CD8-positive, alpha-beta T cell (primary cell): ENCODE measurements at regions of chr9 and their contacts with region 1.

Region 1: DNA sequence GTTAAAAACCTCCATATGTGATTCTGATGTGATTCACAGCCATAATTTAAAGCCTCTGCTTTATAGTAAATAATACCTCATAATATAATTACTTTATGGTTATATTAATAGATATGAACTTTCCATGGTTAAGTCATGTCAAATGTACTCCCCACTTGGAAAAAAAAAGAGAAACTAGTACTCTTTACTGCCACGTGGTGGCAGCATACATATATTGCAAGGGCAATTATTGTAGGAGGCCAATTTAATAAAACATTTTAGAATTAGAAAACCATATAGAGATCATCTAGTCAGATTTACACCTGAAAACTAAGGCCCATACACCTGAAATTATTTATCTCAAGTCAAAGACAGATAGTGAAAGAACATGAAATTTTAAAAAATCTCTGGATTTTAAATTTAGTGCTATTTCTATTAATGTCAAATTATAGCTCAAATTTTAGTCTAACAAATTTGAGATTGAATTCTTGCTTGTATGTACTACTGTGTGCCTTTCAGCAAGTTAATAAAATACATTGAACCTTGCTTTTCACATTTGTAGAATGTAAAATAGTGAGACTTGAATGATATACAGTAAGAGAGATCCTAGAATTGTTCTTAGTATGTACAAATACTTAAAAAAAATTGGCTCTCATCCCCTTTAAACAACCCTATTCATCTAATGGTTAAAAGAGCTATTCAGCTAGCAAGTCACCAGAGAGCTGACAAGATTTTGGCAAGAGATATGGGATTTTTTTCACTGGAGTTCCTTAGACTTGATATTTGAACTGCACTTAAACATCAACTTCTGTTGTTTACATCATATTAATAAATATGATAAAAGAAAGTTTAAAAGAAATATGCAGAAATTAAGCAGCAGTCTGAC is 603.8 kb downstream of the TLE4 start:
- DNase-seq: peak in 2 of 9 experiments; percentile 18 to 36
- ATAC-seq: no peak
- H3K4me3 ChIP-seq: no peak overlapping the region
- H3K4me3 Mint-ChIP-seq: no peak overlapping the region
- H3K27ac ChIP-seq: no peak overlapping the region
- H3K27ac Mint-ChIP-seq: no peak overlapping the region
- H3K4me1 ChIP-seq: no peaks in the 10 kb centered on the region
- H3K4me1 Mint-ChIP-seq: no peaks in the 10 kb centered on the region
- H3K27me3 ChIP-seq: peaks cover 0 to 4% of the 10 kb centered on the region in 2 experiments
- H3K27me3 Mint-ChIP-seq: peaks cover 5% of the 10 kb centered on the region
- CTCF ChIP-seq: peak; percentile 78

Region 2: GRCh38 chr9:78439190-78439865 is 1736.2 kb before region 1 on chr9:
- CTCF ChIA-PET with region 1: no interaction called
- POLR2A ChIA-PET with region 1: no interaction called
- intact Hi-C with region 1: loop called (anchors 5 to 10 kb)
- DNase-seq: peak; percentile 20 to 75 (median 62)
- ATAC-seq: peak; percentile 46
- H3K4me3 ChIP-seq: no peak overlapping the region
- H3K4me3 Mint-ChIP-seq: no peak overlapping the region
- H3K27ac ChIP-seq: no peak overlapping the region
- H3K27ac Mint-ChIP-seq: no peak overlapping the region
- H3K4me1 ChIP-seq: no peaks in the 10 kb centered on the region
- H3K4me1 Mint-ChIP-seq: peaks cover 5% of the 10 kb centered on the region
- H3K27me3 ChIP-seq: peaks cover 0 to 4% of the 10 kb centered on the region in 2 experiments
- H3K27me3 Mint-ChIP-seq: peaks cover 33% of the 10 kb centered on the region
- CTCF ChIP-seq: peak; percentile 96

Region 3: DNA sequence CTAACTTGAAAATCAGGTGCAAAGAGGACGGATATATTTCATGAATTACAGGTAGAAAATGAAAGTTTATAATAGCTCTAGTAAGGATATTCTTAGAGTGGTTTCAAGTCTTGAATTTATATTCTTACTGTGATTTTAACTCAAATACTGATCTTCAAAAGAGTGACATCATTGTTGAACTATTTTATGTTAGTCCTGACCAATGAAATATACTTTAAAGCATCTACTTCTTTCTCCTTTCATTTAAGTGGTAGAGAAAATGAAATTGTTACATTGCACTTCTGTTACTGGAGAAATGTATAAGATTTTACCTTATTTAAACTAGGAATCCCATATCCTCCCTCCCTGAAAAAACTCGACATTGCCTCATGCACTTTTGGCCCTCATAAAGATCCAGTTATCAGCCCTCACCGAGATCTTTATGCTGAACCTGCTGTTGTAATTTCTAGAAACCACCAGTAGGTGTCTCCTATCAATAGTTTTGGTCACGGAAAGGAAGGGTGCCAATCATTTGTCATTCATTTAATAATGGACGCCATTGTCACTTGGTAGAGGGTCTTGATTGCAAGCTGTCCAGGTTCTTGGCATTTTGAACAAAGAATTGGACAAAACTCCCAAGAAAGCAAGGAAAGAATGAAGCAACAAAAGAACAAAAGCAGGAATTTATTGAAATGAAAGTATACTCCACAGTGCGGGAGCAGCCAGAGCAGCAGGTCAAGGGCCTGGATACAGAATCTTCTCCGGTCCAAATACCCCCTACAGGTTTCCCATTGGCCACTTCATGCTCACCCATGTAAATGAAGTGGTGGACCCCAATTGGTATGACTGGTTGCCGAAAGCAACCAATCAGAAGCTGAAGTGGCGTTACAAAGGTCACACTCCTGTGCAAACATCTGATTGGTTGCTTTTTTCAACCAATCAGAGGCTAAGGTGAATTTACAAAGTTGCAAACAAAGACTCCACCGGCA is 1354.4 kb before region 1 on chr9:
- CTCF ChIA-PET with region 1: no interaction called
- POLR2A ChIA-PET with region 1: no interaction called
- intact Hi-C with region 1: loop called in 1 of 2 experiments (anchors 5 kb)
- DNase-seq: peak in 2 of 9 experiments; percentile 13 to 27
- ATAC-seq: no peak
- H3K4me3 ChIP-seq: no peak overlapping the region
- H3K4me3 Mint-ChIP-seq: peak overlapping the region; percentile 68
- H3K27ac ChIP-seq: no peak overlapping the region
- H3K27ac Mint-ChIP-seq: no peak overlapping the region
- H3K4me1 ChIP-seq: no peaks in the 10 kb centered on the region
- H3K4me1 Mint-ChIP-seq: peaks cover 4% of the 10 kb centered on the region
- H3K27me3 ChIP-seq: no peaks in the 10 kb centered on the region
- H3K27me3 Mint-ChIP-seq: no peaks in the 10 kb centered on the region
- CTCF ChIP-seq: peak; percentile 68

Region 4: DNA sequence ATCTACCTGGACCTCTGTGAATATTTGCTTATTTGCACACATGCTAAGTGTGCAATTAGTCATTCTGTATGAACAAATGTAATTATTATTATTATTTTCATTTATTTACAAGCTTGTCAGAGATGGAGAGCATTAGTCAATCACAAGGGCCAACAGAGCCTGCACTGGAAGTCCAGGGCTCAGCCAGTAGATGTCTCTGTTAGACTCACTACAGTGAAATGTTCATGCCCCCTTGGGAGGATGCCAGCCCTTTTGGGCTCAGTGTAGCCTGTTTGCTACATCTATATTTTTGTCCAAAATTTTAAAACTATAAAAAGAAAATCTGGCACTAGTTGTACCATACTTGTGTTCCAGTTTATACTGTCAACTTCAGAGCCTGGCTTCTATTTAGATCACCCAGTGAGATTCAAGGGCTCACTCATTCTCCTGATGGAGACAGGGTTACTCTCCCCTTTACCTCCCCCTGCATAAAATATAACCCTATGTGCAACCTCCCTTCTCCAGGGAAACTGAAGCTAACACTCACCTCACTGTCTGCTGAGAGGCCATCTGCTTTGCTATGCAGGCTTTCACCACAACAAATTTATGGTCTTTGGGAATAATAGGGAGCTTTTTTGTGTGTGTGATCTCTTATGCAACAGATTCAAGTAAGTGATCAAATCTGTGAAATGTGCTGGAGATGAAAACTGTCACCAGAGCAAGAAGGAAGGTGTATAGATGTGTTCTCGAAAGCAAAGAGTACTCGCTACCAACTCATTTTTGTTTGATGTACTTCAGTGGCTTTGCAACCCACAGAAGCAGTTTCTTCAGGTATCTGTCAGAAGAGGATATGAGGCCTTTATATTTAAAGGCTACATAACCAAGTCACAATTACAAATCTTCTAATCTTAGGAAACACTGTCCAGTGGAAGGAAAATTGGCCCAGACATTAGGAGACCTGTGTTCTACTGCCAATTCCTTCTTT is 703.7 kb before region 1 on chr9:
- CTCF ChIA-PET with region 1: no interaction called
- POLR2A ChIA-PET with region 1: no interaction called
- intact Hi-C with region 1: loop called (anchors 2 to 10 kb)
- DNase-seq: peak in 8 of 9 experiments; percentile 14 to 57 (median 41)
- ATAC-seq: peak; percentile 54
- H3K4me3 ChIP-seq: no peak overlapping the region
- H3K4me3 Mint-ChIP-seq: no peak overlapping the region
- H3K27ac ChIP-seq: no peak overlapping the region
- H3K27ac Mint-ChIP-seq: peak overlapping the region; percentile 30
- H3K4me1 ChIP-seq: peaks cover 17% of the 10 kb centered on the region
- H3K4me1 Mint-ChIP-seq: peaks cover 23% of the 10 kb centered on the region
- H3K27me3 ChIP-seq: no peaks in the 10 kb centered on the region
- H3K27me3 Mint-ChIP-seq: no peaks in the 10 kb centered on the region
- CTCF ChIP-seq: no peak

Region 5: GRCh38 chr9:81028504-81028903 is 853.0 kb after region 1 on chr9:
- CTCF ChIA-PET with region 1: no interaction called
- POLR2A ChIA-PET with region 1: no interaction called
- intact Hi-C with region 1: no loop called
- DNase-seq: no peak
- ATAC-seq: no peak
- H3K4me3 ChIP-seq: no peak overlapping the region
- H3K4me3 Mint-ChIP-seq: no peak overlapping the region
- H3K27ac ChIP-seq: no peak overlapping the region
- H3K27ac Mint-ChIP-seq: no peak overlapping the region
- H3K4me1 ChIP-seq: no peaks in the 10 kb centered on the region
- H3K4me1 Mint-ChIP-seq: no peaks in the 10 kb centered on the region
- H3K27me3 ChIP-seq: no peaks in the 10 kb centered on the region
- H3K27me3 Mint-ChIP-seq: no peaks in the 10 kb centered on the region
- CTCF ChIP-seq: no peak

Region 6: DNA sequence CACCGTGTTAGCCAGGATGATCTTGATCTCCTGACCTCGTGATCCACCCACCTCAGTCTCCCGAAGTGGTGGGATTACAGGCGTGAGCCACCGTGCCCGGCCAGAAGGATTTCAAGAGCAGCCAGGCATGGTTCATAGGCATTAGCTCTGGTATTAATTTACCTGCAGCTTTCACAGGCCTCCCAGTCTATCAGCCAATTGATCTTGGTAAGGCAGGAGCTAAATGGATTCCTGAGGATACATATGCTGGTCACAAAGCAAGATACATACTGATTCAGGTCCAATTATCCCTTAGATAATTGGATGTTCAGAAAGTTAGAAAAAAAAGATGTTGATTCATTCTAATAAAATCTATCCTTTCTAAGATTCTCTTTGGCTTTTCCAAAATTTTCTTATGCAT is 1026.8 kb after region 1 on chr9:
- CTCF ChIA-PET with region 1: no interaction called
- POLR2A ChIA-PET with region 1: no interaction called
- intact Hi-C with region 1: no loop called
- DNase-seq: no peak
- ATAC-seq: no peak
- H3K4me3 ChIP-seq: no peak overlapping the region
- H3K4me3 Mint-ChIP-seq: no peak overlapping the region
- H3K27ac ChIP-seq: no peak overlapping the region
- H3K27ac Mint-ChIP-seq: no peak overlapping the region
- H3K4me1 ChIP-seq: no peaks in the 10 kb centered on the region
- H3K4me1 Mint-ChIP-seq: no peaks in the 10 kb centered on the region
- H3K27me3 ChIP-seq: no peaks in the 10 kb centered on the region
- H3K27me3 Mint-ChIP-seq: no peaks in the 10 kb centered on the region
- CTCF ChIP-seq: no peak